ENCODE measurements at regions of chr3 and their contacts with region 1.

Region 1: DNA sequence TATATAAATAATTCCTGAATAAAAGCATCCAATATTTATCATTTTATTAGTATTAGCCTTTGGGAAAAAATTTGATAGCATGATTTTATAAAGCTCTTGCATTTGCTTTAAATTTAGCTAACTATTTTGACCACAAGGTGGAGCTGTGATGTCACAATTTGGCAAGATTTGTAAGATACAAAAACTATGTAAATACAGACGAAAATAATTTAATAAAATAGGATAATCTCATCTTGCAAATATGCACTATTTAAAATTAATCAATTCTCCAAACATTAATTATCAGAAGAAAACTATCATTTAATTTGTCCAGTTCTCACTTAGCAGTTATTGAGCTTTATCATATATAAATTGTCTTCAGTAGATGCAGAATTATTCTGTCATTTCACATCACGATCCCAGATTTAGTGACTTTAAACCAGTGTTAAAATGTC is 95.4 kb downstream of the PLOD2 start:
- ATAC-seq: no peak
- H3K4me3 ChIP-seq: no peak overlapping the region
- H3K27ac ChIP-seq: no peak overlapping the region
- H3K4me1 ChIP-seq: no peaks in the 10 kb centered on the region

Region 2: GRCh38 chr3:145639875-145640274 is 425.7 kb before region 1 on chr3:
- in situ Hi-C with region 1: no loop called
- ATAC-seq: no peak
- H3K4me3 ChIP-seq: no peak overlapping the region
- H3K27ac ChIP-seq: no peak overlapping the region
- H3K4me1 ChIP-seq: peaks cover 0 to 3% of the 10 kb centered on the region in 2 donors

Region 3: DNA sequence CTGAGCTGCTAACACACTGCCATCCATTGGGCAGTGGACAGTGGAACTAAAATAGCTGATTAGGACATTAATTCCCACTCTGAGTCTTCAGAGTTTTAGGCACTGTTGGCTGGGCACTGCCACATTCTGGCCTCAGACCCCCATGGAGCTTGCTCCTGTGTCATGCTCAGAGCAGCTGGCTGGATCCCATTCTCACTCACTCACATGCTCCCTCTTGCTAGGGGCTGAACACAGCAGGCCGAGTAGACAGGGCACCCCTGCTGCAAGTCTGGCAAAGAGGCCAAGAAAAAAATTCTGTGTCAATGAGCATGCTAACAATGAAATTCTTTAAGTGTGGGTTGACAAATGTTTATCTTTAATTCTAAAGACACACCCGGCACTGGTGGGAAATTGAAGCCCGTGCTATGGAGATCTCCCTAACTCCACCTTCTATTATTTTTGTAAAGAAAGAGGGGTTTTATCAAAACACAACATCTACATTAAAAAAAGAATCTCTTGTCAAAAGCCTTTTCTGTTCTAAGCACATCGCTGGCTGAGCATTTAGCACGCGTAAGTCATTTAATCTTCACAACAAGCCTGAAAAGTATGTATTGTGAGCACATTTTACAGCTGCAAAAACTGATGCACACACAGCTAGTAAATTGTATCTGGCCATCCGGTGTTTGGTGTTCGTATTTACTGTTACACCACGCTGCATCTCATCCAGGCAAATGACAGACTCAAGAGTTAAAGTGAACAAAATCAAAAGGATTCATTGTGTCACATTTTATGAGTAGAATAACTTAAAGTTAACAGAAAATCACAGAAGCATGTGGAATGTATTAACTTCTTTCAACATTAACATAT is 266.7 kb before region 1 on chr3:
- in situ Hi-C with region 1: no loop called
- ATAC-seq: peak in 7 of 8 experiments; percentile 54 to 99 (median 97)
- H3K4me3 ChIP-seq: no peak overlapping the region
- H3K27ac ChIP-seq: peak overlapping the region in 1 of 2 donors; percentile 5
- H3K4me1 ChIP-seq: peaks cover 3 to 15% of the 10 kb centered on the region in 2 donors

Region 4: DNA sequence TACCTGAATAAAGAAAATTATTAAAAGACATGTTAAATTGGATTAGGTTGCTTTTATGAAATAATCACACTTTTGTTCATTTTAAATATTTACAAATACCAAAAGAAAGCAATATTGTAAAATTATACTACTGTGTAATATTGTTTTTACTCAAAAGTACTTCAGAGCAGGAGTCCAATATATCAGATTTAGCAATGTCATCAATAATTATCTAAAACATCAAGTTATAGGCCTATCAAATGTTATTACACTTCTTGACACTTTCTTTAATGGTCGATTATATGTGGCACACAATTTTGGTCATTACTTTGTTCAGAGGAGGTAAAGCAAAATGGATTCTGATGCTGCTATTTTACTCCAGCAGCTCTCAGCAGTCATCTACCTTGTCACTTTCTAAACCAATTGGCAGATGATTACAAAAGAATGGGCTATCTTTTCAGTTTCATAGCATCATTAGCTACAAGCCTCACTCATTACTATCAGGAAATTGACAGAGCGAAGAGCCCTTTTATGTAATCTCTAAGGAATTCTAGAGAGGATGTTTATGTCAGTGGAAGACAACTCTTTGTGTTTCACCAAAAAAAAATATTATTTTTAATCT is 223.2 kb before region 1 on chr3:
- in situ Hi-C with region 1: no loop called
- ATAC-seq: no peak
- H3K4me3 ChIP-seq: no peak overlapping the region
- H3K27ac ChIP-seq: no peak overlapping the region
- H3K4me1 ChIP-seq: peaks cover 0 to 2% of the 10 kb centered on the region in 2 donors

Region 5: DNA sequence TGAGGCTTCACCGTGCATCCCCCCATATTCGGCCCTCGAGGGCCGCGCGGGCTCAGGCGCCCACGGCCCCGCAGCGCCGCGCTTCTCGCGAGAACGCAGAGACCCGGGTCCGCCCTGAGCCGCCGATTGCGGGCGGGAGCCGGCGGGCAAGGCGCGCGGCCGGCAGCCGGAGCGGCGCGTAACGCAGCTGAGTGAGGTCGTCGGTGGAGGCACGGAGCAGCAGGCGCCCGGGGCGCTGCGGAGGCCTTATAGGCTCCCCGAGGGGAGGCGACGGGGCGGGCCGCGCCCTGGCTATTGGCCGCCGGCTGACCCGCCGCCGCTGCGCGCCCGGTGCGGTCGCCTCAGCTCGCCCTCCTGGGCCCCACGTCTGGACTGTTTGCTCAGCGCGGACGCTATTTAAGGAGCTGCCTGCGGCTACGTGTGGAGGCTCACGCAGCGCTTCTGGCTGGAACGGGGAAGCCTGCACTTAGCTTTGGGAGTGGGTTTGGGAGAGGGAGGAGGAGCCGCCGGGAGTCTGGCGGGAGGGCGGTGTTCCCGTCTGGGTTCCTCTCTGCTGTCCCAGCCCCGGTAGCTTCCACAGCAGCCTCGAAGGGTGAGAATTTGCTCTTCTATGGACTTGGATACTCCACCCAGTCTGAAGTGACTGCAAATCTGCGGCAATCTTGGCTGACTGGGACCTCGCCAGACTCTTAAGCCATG is 95.5 kb after region 1 on chr3 and contains the start of gene PLOD2:
- in situ Hi-C with region 1: loop called in 2 of 9 experiments (anchors 10 to 25 kb)
- ATAC-seq: peak; percentile 72 to 90 (median 86)
- H3K4me3 ChIP-seq: peak within 1 kb of the TSS; percentile 55 to 74 (median 66)
- H3K27ac ChIP-seq: peak within 1 kb of the TSS; percentile 80 to 86
- H3K4me1 ChIP-seq: peaks cover 19 to 21% of the 10 kb centered on the region in 2 donors
- total RNA-seq, gene PLOD2: 15.9 to 105 (median 32.7) TPM

Region 6: DNA sequence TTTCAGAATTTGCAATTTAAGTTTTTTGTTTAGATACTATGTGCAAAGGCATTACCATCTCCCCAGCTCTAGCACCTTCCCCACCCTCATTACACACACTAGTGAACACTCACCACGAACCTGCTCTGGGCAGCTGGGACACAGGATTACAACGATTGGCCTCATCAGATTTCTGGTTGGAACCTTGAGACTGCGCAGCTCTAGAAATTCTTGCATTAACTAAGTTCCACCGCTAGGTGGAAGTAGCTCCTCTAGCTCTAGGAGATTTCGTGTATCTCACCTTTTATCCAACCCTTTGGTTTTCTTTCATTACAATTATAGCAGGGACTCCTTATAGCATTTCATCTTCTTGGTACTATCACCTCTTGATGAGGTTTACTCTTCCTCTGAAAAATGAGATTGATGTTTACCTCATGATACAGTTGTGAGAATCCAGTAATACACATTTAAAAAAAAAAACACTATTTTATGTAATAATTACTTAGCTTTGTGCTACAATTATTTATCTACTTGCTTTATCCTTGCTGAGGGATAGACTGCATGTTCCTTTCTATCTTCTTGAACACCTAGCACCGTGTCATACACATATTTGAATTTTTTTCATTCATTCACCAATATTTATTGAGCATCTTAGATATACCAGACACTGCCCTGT is 124.1 kb after region 1 on chr3:
- in situ Hi-C with region 1: loop called in 2 of 9 experiments (anchors 25 kb)
- ATAC-seq: peak; percentile 58 to 94 (median 76)
- H3K4me3 ChIP-seq: no peak overlapping the region
- H3K27ac ChIP-seq: no peak overlapping the region
- H3K4me1 ChIP-seq: peaks cover 0 to 2% of the 10 kb centered on the region in 2 donors

Region 7: GRCh38 chr3:146313411-146314111 is 248.0 kb after region 1 on chr3:
- in situ Hi-C with region 1: loop called in 1 of 9 experiments (anchors 25 kb)
- ATAC-seq: peak in 3 of 8 experiments; percentile 25 to 89 (median 88)
- H3K4me3 ChIP-seq: no peak overlapping the region
- H3K27ac ChIP-seq: no peak overlapping the region
- H3K4me1 ChIP-seq: no peaks in the 10 kb centered on the region

Region 8: DNA sequence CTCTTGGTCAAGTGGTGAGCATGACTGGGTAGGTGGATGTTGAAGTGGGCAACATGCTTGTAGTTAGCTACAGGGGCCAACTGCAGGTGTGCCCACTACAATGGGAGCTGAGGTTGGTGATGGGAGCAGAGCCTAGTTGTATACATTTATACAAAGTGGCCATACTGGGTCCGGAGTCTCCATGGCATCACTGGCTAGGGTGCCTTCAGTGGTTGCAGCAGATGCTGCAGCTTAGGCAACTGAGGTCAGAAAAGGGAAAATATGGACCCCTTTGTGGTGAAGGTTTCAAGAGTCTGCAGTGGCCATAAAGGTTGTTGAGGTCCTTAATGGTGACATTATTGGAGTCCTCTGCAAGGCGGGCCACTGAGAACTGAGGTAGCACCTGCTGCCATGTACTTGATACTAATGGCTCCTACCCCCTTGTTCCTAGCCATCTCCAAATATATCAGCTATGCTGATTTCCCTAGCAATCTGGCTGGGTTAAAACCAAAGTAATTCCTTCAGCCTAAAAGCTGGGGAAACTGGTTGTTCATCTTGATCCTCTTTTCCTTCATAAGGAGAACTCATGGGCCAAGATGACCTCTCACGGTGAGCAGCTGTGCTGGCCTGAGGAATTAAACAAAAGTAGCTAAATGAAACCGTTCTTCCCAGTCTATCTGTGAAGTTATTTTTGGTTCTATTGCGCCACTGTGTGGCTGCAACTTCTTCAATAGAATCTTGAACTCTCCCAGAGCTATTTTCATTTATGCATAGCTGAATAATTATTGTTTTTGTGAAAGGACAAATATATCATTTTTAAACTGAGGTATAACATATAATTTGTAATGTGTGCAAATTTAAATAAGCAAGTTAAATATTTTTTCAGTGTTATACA is 261.3 kb after region 1 on chr3:
- in situ Hi-C with region 1: loop called in 2 of 9 experiments (anchors 25 kb)
- ATAC-seq: peak in 3 of 8 experiments; percentile 87 to 89 (median 89)
- H3K4me3 ChIP-seq: no peak overlapping the region
- H3K27ac ChIP-seq: no peak overlapping the region
- H3K4me1 ChIP-seq: no peaks in the 10 kb centered on the region